HepG2 (cell line): ENCODE measurements at regions of chr11 and their contacts with region 1.

Region 1: DNA sequence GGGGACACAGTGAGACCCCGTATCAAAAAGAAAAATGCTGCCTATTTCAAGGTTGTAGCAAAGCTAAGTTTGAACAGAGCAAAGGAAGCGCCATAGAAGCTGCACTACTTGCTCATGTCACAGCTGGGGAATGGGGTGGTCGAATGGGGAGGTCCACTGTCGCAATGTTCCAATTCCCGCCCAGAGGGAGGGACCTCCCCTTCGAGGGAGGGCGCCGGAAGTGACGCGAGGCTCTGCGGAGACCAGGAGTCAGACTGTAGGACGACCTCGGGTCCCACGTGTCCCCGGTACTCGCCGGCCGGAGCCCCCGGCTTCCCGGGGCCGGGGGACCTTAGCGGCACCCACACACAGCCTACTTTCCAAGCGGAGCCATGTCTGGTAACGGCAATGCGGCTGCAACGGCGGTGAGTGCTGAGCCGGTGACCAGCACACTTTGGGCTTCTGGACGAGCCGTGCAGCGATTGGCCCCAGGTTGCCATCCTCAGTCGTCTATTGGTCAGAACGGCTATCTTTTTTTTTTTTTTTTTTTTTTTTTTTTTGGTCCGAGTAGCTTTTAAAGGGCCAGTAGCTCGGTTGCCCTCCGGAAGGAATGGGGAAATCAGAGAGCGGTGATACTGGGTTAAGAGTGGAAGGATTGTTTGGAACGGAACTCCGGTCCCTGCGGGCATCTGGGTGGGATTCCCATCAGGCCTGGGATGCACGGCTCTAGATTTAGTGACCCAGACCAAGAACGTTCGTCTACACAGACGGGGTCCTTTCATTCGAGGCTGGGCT is at the start of gene HMBS:
- DNase-seq: peak; percentile 92
- ATAC-seq: peak; percentile 89
- H3K4me3 ChIP-seq: peak within 1 kb of the TSS; percentile 71 to 93 (median 77)
- H3K27ac ChIP-seq: peak within 1 kb of the TSS; percentile 98
- H3K4me1 ChIP-seq: peaks cover 30% of the 10 kb centered on the region
- H3K27me3 ChIP-seq: no peaks in the 10 kb centered on the region; a peak in 1 of 5 replicates
- CTCF ChIP-seq: no peak
- EP300 ChIP-seq: no peak
- POLR2A ChIP-seq: peak; percentile 83 to 93
- RAD21 ChIP-seq: peak; percentile 45; the same call in 1 of the 2 replicates
- total RNA-seq, gene HMBS: 9.4 and 14.0 TPM in 2 replicates

Region 2: GRCh38 chr11:119006656-119007055 is 78.2 kb before region 1 on chr11:
- CTCF ChIA-PET with region 1: no interaction called
- POLR2A ChIA-PET with region 1: no interaction called
- in situ Hi-C with region 1: no loop called
- intact Hi-C with region 1: no loop called
- DNase-seq: no peak
- ATAC-seq: no peak
- H3K4me3 ChIP-seq: no peak overlapping the region
- H3K27ac ChIP-seq: no peak overlapping the region
- H3K4me1 ChIP-seq: no peaks in the 10 kb centered on the region
- H3K27me3 ChIP-seq: no peaks in the 10 kb centered on the region
- CTCF ChIP-seq: no peak
- EP300 ChIP-seq: no peak
- POLR2A ChIP-seq: no peak
- RAD21 ChIP-seq: no peak

Region 3: GRCh38 chr11:119023741-119024140 is 61.1 kb before region 1 on chr11:
- CTCF ChIA-PET with region 1: no interaction called
- POLR2A ChIA-PET with region 1: interaction called, 11 read pairs
- in situ Hi-C with region 1: no loop called
- intact Hi-C with region 1: no loop called
- DNase-seq: no peak
- ATAC-seq: no peak
- H3K4me3 ChIP-seq: no peak overlapping the region
- H3K27ac ChIP-seq: peak overlapping the region; percentile 77
- H3K4me1 ChIP-seq: peaks cover 92% of the 10 kb centered on the region
- H3K27me3 ChIP-seq: peaks cover 0 to 3% of the 10 kb centered on the region in 2 experiments; a peak in 2 of 5 replicates
- CTCF ChIP-seq: no peak
- EP300 ChIP-seq: no peak
- POLR2A ChIP-seq: no peak
- RAD21 ChIP-seq: no peak

Region 4: DNA sequence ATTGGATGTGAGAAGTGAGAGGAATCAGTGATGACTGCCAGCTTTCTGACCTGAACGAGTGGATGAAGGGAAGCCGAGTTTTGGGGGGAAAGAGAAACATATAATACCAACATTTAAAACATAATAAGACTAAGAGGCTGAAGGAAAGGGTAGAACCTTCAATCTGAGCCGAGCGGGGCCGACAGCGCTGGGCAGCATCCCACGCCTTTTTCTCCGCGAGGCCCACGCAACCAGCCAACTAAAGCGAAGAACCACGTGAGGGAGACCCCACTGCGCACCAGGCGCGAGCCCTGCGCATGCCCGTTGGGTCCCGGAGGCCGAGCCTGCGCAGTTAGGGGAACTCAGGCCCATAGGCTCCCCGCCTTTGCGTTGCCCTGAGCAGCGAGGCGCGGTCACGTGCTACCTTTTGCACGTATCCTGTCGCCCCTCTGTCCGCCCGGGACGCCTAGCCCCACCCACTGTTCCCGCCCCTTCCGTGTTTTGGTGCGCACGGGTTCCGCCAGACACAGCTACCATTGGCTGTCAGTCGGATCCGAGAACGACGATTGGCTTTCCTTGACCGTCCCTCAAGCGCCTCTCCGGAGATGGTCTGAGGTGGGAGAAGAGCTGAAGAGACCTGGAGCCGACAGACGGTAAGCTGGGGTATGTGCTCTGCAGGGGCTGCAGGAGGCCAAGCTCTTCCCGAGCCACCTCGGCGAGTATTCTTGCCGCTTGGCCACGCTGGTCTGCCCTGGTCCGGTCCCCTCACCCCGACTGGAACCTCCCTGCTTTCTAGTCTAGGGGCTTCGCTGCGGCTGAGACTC is 36.4 kb after region 1 on chr11 and contains the start of gene HINFP:
- CTCF ChIA-PET with region 1: no interaction called
- POLR2A ChIA-PET with region 1: interaction called, 25 read pairs
- in situ Hi-C with region 1: no loop called
- intact Hi-C with region 1: no loop called
- DNase-seq: peak; percentile 97
- ATAC-seq: peak; percentile 98
- H3K4me3 ChIP-seq: peak within 1 kb of the TSS; percentile 81 to 98 (median 84)
- H3K27ac ChIP-seq: peak within 1 kb of the TSS; percentile 55
- H3K4me1 ChIP-seq: peaks cover 36% of the 10 kb centered on the region
- H3K27me3 ChIP-seq: no peaks in the 10 kb centered on the region; a peak in 1 of 5 replicates
- CTCF ChIP-seq: no peak; the same call in 1 of the 2 replicates
- EP300 ChIP-seq: no peak
- POLR2A ChIP-seq: peak; percentile 65 to 84
- RAD21 ChIP-seq: 0 out of 2 replicates have a peak, but pooled peaks have one; percentile 20
- total RNA-seq, gene HINFP: 13.3 and 15.1 TPM in 2 replicates